ENCODE measurements at regions of chr3 and their contacts with region 1.

Region 1: GRCh38 chr3:5607581-5607980 is 420.1 kb downstream of the EDEM1 start:
- DNase-seq: no peak
- H3K4me3 ChIP-seq: no peak overlapping the region
- H3K27ac ChIP-seq: no peak overlapping the region
- H3K4me1 ChIP-seq: no peaks in the 10 kb centered on the region
- H3K27me3 ChIP-seq: no peaks in the 10 kb centered on the region
- CTCF ChIP-seq: no peak
- POLR2A ChIP-seq: no peak

Region 2: GRCh38 chr3:5239602-5240001 is 368.0 kb before region 1 on chr3:
- intact Hi-C with region 1: loop called (anchors 5 kb)
- DNase-seq: no peak
- H3K4me3 ChIP-seq: no peak overlapping the region
- H3K27ac ChIP-seq: no peak overlapping the region
- H3K4me1 ChIP-seq: no peaks in the 10 kb centered on the region
- H3K27me3 ChIP-seq: no peaks in the 10 kb centered on the region
- CTCF ChIP-seq: no peak
- POLR2A ChIP-seq: no peak